Naive thymus-derived CD4-positive, alpha-beta T cell (primary cell): ENCODE measurements at regions of chr20 and their contacts with region 1.

Region 1: GRCh38 chr20:31572701-31573554 is 32.2 kb upstream of the ID1 start:
- DNase-seq: peak; percentile 67 to 85 (median 77)
- ATAC-seq: peak; percentile 95
- H3K4me3 ChIP-seq: peak overlapping the region; percentile 74
- H3K4me3 Mint-ChIP-seq: peak overlapping the region; percentile 85 to 93 (median 90)
- H3K27ac ChIP-seq: peak overlapping the region; percentile 87
- H3K27ac Mint-ChIP-seq: peak overlapping the region; percentile 89 to 96 (median 93)
- H3K4me1 ChIP-seq: peaks cover 5 to 9% of the 10 kb centered on the region in 2 donors
- H3K4me1 Mint-ChIP-seq: peaks cover 17 to 32% (median 22%) of the 10 kb centered on the region in 7 donors
- H3K27me3 ChIP-seq: no peaks in the 10 kb centered on the region
- H3K27me3 Mint-ChIP-seq: no peaks in the 10 kb centered on the region

Region 2: DNA sequence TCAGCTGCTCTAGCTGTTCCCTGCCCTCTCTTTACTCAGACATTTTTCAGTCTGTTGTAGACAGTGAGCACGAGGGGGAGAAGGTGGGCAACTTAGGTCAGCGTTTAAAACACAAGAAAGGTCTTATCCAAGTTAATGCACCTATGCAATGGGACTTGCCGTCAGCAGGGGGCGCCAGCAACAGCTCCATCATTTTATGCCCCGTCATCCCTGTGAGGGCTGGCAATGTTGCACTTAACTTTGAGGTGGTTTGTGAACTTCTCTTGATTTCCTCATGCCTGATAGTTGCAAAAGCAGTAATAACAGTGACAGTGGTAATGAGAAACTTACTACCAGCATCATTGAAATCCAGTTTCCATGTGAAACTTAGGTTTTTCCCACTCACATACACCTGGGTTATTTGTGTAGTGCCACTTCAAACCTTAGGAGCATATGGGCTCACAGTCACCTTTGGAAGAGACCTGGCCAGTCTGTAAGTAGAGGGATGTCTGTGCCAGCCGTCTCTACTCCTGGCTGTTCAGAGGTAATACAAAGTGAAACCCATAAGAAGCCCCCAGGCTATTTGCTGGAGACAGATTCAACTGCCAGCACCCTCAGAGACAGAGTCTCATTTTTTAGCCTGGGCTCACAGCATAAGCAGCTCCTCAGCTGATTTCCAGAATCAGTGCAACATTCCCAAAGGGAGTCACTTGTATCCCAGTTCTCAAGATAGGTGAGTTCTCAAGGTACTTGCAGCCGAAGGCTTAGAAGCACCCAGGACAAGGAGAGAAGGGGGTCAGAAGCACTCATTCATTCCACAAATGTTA is 12.6 kb before region 1 on chr20:
- CTCF ChIA-PET with region 1: interaction called, 30 read pairs
- POLR2A ChIA-PET with region 1: interaction called, 6 read pairs
- intact Hi-C with region 1: loop called (anchors 1 kb)
- DNase-seq: peak; percentile 62 to 81 (median 75)
- ATAC-seq: peak; percentile 87
- H3K4me3 ChIP-seq: no peak overlapping the region
- H3K4me3 Mint-ChIP-seq: no peak overlapping the region
- H3K27ac ChIP-seq: no peak overlapping the region
- H3K27ac Mint-ChIP-seq: peak overlapping the region in 6 of 9 donors; percentile 37 to 81 (median 66)
- H3K4me1 ChIP-seq: peaks cover 0 to 6% of the 10 kb centered on the region in 2 donors
- H3K4me1 Mint-ChIP-seq: peaks cover 3 to 20% (median 10%) of the 10 kb centered on the region in 7 donors
- H3K27me3 ChIP-seq: no peaks in the 10 kb centered on the region
- H3K27me3 Mint-ChIP-seq: no peaks in the 10 kb centered on the region

Region 3: GRCh38 chr20:31587545-31588389 is 14.8 kb after region 1 on chr20:
- CTCF ChIA-PET with region 1: interaction called, 5 read pairs
- POLR2A ChIA-PET with region 1: interaction called, 3 read pairs
- intact Hi-C with region 1: loop called in 1 of 2 experiments (anchors 2 kb)
- DNase-seq: peak in 1 of 9 donors; percentile 52
- ATAC-seq: peak; percentile 56
- H3K4me3 ChIP-seq: peak overlapping the region; percentile 9
- H3K4me3 Mint-ChIP-seq: peak overlapping the region; percentile 74 to 95 (median 84)
- H3K27ac ChIP-seq: no peak overlapping the region
- H3K27ac Mint-ChIP-seq: peak overlapping the region in 1 of 9 donors; percentile 78
- H3K4me1 ChIP-seq: peaks cover 0 to 6% of the 10 kb centered on the region in 2 donors
- H3K4me1 Mint-ChIP-seq: peaks cover 5 to 8% (median 6%) of the 10 kb centered on the region in 7 donors
- H3K27me3 ChIP-seq: peaks cover 4 to 6% of the 10 kb centered on the region in 2 donors
- H3K27me3 Mint-ChIP-seq: peaks cover 12 to 37% (median 22%) of the 10 kb centered on the region in 5 donors

Region 4: DNA sequence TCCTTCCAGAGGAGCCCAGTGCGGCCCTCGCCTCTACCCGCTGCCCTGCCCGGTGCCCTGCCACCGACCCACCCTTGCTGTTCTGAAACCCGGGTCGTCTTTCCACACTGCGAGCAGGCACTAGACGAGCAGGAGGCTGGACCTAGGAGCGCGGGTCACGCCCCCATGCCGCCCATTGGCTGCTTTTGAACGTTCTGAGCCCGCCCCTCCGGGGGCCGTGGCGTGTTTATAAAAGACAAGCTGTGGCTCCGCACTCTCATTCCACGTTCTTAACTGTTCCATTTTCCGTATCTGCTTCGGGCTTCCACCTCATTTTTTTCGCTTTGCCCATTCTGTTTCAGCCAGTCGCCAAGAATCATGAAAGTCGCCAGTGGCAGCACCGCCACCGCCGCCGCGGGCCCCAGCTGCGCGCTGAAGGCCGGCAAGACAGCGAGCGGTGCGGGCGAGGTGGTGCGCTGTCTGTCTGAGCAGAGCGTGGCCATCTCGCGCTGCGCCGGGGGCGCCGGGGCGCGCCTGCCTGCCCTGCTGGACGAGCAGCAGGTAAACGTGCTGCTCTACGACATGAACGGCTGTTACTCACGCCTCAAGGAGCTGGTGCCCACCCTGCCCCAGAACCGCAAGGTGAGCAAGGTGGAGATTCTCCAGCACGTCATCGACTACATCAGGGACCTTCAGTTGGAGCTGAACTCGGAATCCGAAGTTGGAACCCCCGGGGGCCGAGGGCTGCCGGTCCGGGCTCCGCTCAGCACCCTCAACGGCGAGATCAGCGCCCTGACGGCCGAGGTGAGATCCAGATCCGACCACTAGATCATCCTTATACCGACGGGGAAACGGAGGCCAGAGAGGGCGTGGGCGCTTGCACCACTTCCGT is 32.3 kb after region 1 on chr20 and contains the start of gene ID1:
- CTCF ChIA-PET with region 1: interaction called, 568 read pairs
- POLR2A ChIA-PET with region 1: interaction called, 23 read pairs
- intact Hi-C with region 1: loop called (anchors 1 kb)
- DNase-seq: peak; percentile 76 to 88 (median 86)
- ATAC-seq: peak; percentile 95
- H3K4me3 ChIP-seq: peak within 1 kb of the TSS; percentile 97
- H3K4me3 Mint-ChIP-seq: peak within 1 kb of the TSS; percentile 85 to 97 (median 96)
- H3K27ac ChIP-seq: peak within 1 kb of the TSS; percentile 42
- H3K27ac Mint-ChIP-seq: peak within 1 kb of the TSS in 8 of 9 donors; percentile 30 to 88 (median 71)
- H3K4me1 ChIP-seq: peaks cover 5 to 27% of the 10 kb centered on the region in 2 donors
- H3K4me1 Mint-ChIP-seq: peaks cover 7 to 29% (median 17%) of the 10 kb centered on the region in 7 donors
- H3K27me3 ChIP-seq: peaks cover 0 to 11% of the 10 kb centered on the region in 2 donors
- H3K27me3 Mint-ChIP-seq: peaks cover 24 to 62% (median 33%) of the 10 kb centered on the region in 5 donors
- total RNA-seq, gene ID1: 0.41 to 16.9 (median 0.62) TPM

Region 5: DNA sequence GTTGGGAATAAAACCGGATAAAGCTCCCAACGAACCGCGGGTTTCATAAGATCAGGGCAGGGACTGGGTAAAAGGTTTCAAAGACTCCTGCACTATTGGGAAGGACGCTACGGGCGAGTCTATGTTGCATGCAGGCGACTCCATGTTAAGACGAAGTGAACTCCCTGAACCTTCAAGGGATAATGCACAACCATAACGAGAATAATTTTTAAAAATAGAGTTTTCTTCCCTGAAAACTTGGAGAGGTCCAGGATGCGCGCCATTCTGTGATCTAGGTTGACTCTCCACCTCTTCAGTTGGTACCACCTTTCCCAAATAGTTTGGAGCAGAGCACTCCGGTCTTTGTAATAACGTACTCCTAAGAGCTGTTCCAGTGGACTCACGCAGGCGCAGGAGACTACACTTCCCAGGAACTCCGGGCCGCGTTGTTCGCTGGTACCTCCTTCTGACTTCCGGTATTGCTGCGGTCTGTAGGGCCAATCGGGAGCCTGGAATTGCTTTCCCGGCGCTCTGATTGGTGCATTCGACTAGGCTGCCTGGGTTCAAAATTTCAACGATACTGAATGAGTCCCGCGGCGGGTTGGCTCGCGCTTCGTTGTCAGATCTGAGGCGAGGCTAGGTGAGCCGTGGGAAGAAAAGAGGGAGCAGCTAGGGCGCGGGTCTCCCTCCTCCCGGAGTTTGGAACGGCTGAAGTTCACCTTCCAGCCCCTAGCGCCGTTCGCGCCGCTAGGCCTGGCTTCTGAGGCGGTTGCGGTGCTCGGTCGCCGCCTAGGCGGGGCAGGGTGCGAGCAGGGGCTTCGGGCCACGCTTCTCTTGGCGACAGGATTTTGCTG is 166.0 kb after region 1 on chr20 and contains the start of gene TPX2:
- CTCF ChIA-PET with region 1: no interaction called
- POLR2A ChIA-PET with region 1: no interaction called
- intact Hi-C with region 1: loop called in 1 of 2 experiments (anchors 5 kb)
- DNase-seq: peak; percentile 41 to 80 (median 75)
- ATAC-seq: peak; percentile 97
- H3K4me3 ChIP-seq: peak within 1 kb of the TSS; percentile 81
- H3K4me3 Mint-ChIP-seq: no peak within 1 kb of the TSS
- H3K27ac ChIP-seq: peak within 1 kb of the TSS; percentile 62
- H3K27ac Mint-ChIP-seq: peak within 1 kb of the TSS in 1 of 9 donors; percentile 10
- H3K4me1 ChIP-seq: peaks cover 0 to 8% of the 10 kb centered on the region in 2 donors
- H3K4me1 Mint-ChIP-seq: peaks cover 0 to 7% (median 0%) of the 10 kb centered on the region in 7 donors
- H3K27me3 ChIP-seq: no peaks in the 10 kb centered on the region
- H3K27me3 Mint-ChIP-seq: peaks cover 0 to 15% (median 0%) of the 10 kb centered on the region in 5 donors
- total RNA-seq, gene TPX2: 0.16 to 84.3 (median 0.43) TPM